Activated naive CD4-positive, alpha-beta T cell treated with anti-CD3 and anti-CD28 coated beads for 36 hours (primary cell): ENCODE measurements at regions of chr6 and their contacts with region 1.

Region 1: DNA sequence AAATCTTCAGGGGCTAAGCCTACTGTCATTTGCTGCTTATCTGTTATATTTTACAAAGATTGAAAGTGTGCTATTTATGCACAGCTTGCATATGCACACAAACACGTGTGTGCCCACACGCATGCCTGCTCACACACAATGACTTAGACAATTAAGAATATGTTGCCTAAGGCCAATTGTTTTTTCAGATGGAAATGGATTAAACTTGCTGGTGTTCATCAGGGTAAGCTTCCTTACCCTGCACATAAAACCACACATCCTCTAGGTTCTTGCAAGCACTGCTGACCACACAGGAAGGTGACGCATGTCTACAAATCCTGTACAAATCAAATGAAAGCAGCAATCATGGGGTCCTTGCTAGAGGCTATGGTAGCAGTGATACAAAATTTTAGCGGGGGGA is 58.4 kb downstream of the GJA10 start:
- DNase-seq: peak; percentile 70
- H3K4me3 Mint-ChIP-seq: no peak overlapping the region
- H3K27ac Mint-ChIP-seq: peak overlapping the region; percentile 75
- H3K4me1 Mint-ChIP-seq: peaks cover 74% of the 10 kb centered on the region
- H3K27me3 Mint-ChIP-seq: no peaks in the 10 kb centered on the region

Region 2: DNA sequence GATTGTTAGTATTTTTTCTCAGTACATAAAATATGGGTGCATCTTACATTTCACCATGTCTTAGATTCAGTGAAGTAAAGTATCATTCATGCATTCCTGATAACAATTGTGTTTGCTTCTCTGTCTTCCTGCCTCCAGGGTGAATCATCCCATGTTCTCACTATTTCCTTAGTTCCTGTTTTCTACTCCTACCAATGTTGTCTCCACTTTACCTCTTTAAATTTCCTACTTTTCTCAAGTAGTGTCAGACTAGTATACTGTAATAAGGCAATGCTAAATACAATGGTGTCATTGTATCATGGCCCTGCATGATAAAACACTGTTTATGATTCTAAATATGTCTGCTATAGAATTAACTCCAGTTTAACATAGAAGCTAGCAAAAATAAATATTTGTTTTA is 698.1 kb before region 1 on chr6:
- CTCF ChIA-PET with region 1: no interaction called
- intact Hi-C with region 1: no loop called
- DNase-seq: no peak
- H3K4me3 Mint-ChIP-seq: no peak overlapping the region
- H3K27ac Mint-ChIP-seq: no peak overlapping the region
- H3K4me1 Mint-ChIP-seq: no peaks in the 10 kb centered on the region
- H3K27me3 Mint-ChIP-seq: no peaks in the 10 kb centered on the region

Region 3: DNA sequence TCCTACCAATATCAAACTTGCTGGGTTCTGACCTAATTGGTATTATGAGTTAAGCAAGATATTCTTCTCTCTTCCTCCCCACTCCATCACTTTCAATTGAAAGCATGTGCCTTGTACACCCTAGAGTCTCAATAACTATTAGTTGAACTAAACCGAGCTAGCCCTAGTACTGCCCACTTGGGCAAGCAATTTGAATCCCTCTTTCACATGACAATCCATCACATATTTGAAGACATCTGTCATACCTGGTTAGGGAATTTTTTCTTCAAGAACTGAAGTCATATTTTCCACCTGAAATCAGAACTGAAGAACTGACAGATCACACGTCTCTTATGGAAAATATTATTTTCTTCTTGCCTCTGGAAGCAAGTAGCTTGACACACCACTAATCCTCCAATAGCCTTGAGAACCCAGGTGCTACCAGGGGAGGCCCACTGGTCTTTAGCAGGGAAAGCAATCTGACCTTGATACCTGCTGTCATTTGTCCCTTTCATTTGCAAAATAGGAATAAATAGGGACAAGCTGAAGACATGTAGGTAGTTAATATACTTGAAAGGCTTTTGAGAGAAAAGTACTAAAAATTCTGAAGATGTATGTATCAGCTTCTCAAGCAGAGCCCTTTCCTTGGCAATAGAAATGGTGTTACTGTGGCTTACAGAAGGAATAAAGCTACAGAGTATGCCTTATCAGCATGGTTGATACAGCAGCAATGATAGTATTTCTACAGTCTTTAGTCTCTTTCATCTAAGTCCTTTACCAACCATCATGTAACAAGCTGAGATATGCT is 12.9 kb after region 1 on chr6:
- CTCF ChIA-PET with region 1: interaction called, 7 read pairs
- intact Hi-C with region 1: loop called (anchors 1 kb)
- DNase-seq: no peak
- H3K4me3 Mint-ChIP-seq: no peak overlapping the region
- H3K27ac Mint-ChIP-seq: peak overlapping the region; percentile 82
- H3K4me1 Mint-ChIP-seq: peaks cover 76% of the 10 kb centered on the region
- H3K27me3 Mint-ChIP-seq: no peaks in the 10 kb centered on the region

Region 4: GRCh38 chr6:89978749-89979145 is 26.1 kb after region 1 on chr6:
- CTCF ChIA-PET with region 1: interaction called, 3 read pairs
- intact Hi-C with region 1: loop called (anchors 1 kb)
- DNase-seq: no peak
- H3K4me3 Mint-ChIP-seq: no peak overlapping the region
- H3K27ac Mint-ChIP-seq: no peak overlapping the region
- H3K4me1 Mint-ChIP-seq: peaks cover 45% of the 10 kb centered on the region
- H3K27me3 Mint-ChIP-seq: no peaks in the 10 kb centered on the region

Region 5: GRCh38 chr6:90025523-90026061 is 72.9 kb after region 1 on chr6:
- CTCF ChIA-PET with region 1: interaction called, 3 read pairs
- intact Hi-C with region 1: loop called (anchors 1 kb)
- DNase-seq: peak; percentile 85
- H3K4me3 Mint-ChIP-seq: peak overlapping the region; percentile 47
- H3K27ac Mint-ChIP-seq: peak overlapping the region; percentile 87
- H3K4me1 Mint-ChIP-seq: peaks cover 93% of the 10 kb centered on the region
- H3K27me3 Mint-ChIP-seq: no peaks in the 10 kb centered on the region